Left cardiac atrium (tissue), 4 donors: ENCODE measurements at regions of chr12 and their contacts with region 1.

Region 1: GRCh38 chr12:57693659-57694458 is at the start of gene OS9:
- DNase-seq: peak; percentile 96
- ATAC-seq: peak; percentile 99
- total RNA-seq, gene OS9: 160 to 163 TPM

Region 2: GRCh38 chr12:57632694-57633477 is 61.0 kb before region 1 on chr12 and contains the start of gene B4GALNT1:
- intact Hi-C with region 1: loop called in 1 of 2 experiments (anchors 5 kb)
- DNase-seq: peak; percentile 67
- ATAC-seq: peak; percentile 88 to 91
- total RNA-seq, gene B4GALNT1: 2.4 to 3.3 TPM

Region 3: DNA sequence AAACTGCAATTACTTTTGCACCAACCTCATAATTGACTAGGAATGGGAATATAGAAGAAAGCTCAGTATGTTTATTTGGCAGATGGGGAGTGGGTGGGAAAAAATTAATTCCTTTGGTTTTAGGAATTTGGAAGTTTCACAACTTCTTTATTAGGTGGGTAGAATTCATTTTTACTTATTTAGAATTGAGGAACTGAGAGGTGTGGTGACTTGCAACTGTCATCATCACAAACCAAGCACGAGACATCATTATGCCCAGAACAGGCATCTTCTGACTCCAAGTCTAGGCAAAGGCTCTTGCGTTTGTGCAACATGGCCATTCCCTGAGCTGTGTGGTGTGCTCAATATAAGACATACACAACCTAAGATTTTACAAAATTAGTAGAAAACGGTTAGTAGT is 627.6 kb after region 1 on chr12:
- intact Hi-C with region 1: no loop called
- DNase-seq: no peak
- ATAC-seq: no peak